Heart left ventricle (tissue), 16 donors: ENCODE measurements at regions of chr11 and their contacts with region 1.

Region 1: GRCh38 chr11:33362051-33362910 is 105.1 kb downstream of the HIPK3 start:
- DNase-seq: no peak
- ATAC-seq: peak in 3 of 4 donors; percentile 20 to 48 (median 33)
- H3K4me3 ChIP-seq: no peak overlapping the region
- H3K27ac ChIP-seq: no peak overlapping the region
- H3K4me1 ChIP-seq: peaks cover 0 to 15% (median 2%) of the 10 kb centered on the region in 12 donors
- H3K27me3 ChIP-seq: no peaks in the 10 kb centered on the region
- CTCF ChIP-seq: peak; percentile 62 to 86 (median 76)
- POLR2A ChIP-seq: no peak

Region 2: GRCh38 chr11:33542921-33543320 is 180.6 kb after region 1 on chr11:
- intact Hi-C with region 1: loop called in 1 of 10 experiments (anchors 10 kb)
- DNase-seq: peak in 3 of 5 donors; percentile 36 to 44 (median 40)
- ATAC-seq: peak in 2 of 4 donors; percentile 46
- H3K4me3 ChIP-seq: no peak overlapping the region
- H3K27ac ChIP-seq: no peak overlapping the region
- H3K4me1 ChIP-seq: peaks cover 0 to 16% (median 2%) of the 10 kb centered on the region in 12 donors
- H3K27me3 ChIP-seq: peaks cover 0 to 3% (median 0%) of the 10 kb centered on the region in 9 donors
- CTCF ChIP-seq: peak; percentile 38 to 63 (median 56)
- POLR2A ChIP-seq: no peak

Region 3: GRCh38 chr11:33564856-33565453 is 202.7 kb after region 1 on chr11:
- intact Hi-C with region 1: loop called in 1 of 10 experiments (anchors 10 kb)
- DNase-seq: no peak
- ATAC-seq: no peak
- H3K4me3 ChIP-seq: no peak overlapping the region
- H3K27ac ChIP-seq: no peak overlapping the region
- H3K4me1 ChIP-seq: no peaks in the 10 kb centered on the region
- H3K27me3 ChIP-seq: peaks cover 0 to 3% (median 0%) of the 10 kb centered on the region in 9 donors
- CTCF ChIP-seq: no peak
- POLR2A ChIP-seq: no peak

Region 4: DNA sequence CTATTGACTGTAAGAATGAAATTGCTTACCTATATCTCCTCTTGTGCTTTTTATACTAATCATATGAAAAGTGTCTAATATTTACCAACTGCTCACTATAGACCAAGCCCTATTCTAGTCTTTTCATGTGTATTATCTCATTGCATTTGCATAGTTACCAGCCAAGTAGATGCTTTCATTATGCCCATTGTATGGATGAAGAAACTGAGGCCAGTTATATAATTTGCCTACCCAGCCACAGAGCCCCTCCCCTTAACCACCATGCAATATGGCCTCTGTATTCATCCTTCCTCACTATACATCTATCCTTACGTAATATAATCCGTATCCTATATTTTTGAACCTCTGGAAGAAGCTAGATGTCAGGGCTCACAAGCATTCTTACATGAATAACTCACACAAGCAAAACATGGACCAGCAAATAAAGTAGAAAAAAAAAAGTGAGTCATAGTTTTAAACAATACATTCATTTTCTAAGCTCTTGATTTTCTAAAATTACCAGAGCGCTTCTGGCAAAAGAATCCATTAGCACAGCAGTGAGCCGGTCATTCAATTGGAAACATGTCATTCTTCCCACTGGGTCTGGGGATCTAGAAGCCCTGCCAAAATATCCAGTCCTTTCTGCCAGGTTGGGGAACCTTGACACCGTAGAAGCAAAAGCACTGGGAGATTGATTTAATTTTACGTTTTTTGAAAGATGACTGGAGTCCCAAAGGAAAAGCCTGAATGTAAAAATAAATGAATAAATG is 258.3 kb after region 1 on chr11:
- intact Hi-C with region 1: no loop called
- DNase-seq: no peak
- ATAC-seq: peak in 1 of 4 donors; percentile 28
- H3K4me3 ChIP-seq: no peak overlapping the region
- H3K27ac ChIP-seq: no peak overlapping the region
- H3K4me1 ChIP-seq: peaks cover 0 to 5% (median 0%) of the 10 kb centered on the region in 12 donors
- H3K27me3 ChIP-seq: no peaks in the 10 kb centered on the region
- CTCF ChIP-seq: no peak
- POLR2A ChIP-seq: no peak

Region 5: DNA sequence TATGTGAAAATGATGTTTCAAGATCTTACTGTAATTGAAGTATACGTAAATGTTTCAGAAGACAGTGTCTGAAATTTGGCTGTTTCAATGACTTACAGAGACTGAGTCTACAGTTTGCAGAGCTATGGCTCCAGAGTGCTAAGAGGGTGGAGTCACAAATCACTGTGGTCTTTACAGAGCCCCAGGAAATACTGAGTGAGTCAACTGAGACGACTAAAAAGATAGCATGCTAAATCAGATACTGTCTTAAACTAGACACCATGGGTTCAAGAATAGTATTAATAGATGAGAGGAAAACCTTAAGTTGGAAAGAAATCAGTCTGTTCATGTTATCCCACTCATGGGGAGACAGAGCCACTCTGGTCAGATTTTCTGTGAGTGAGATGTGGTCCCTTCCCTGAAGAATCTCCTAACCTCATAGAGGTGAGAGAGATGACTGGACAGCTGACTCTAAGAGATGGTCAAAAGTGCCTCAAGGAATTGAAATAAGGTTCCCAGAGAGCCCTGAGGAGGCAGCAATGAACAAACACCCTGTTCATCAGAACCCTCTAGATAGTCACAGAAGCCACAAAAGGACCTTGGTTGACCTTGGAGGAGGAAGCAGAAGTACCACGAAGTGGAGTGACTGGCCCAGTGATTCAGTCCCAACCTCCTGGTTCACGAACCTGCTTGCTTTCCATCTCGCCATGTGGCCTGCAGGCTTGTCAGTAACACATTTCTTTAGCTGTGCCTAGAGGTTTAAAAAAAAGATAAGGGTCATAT is 308.1 kb after region 1 on chr11:
- intact Hi-C with region 1: loop called in 1 of 10 experiments (anchors 5 kb)
- DNase-seq: no peak
- ATAC-seq: no peak
- H3K4me3 ChIP-seq: no peak overlapping the region
- H3K27ac ChIP-seq: no peak overlapping the region
- H3K4me1 ChIP-seq: no peaks in the 10 kb centered on the region
- H3K27me3 ChIP-seq: no peaks in the 10 kb centered on the region
- CTCF ChIP-seq: no peak
- POLR2A ChIP-seq: no peak

Region 6: GRCh38 chr11:33736148-33736809 is 374.0 kb after region 1 on chr11 and contains the start of gene CD59:
- intact Hi-C with region 1: loop called in 9 of 10 experiments (anchors 5 kb)
- DNase-seq: peak; percentile 98
- ATAC-seq: peak; percentile 94 to 96 (median 96)
- H3K4me3 ChIP-seq: peak within 1 kb of the TSS; percentile 75 to 98 (median 92)
- H3K27ac ChIP-seq: peak within 1 kb of the TSS; percentile 93 to 100 (median 98)
- H3K4me1 ChIP-seq: peaks cover 4 to 51% (median 41%) of the 10 kb centered on the region in 12 donors
- H3K27me3 ChIP-seq: no peaks in the 10 kb centered on the region
- CTCF ChIP-seq: peak in 1 of 12 donors; percentile 19
- POLR2A ChIP-seq: peak; percentile 80 to 98
- total RNA-seq, gene CD59: 588 to 1,434 (median 930) TPM

Region 7: DNA sequence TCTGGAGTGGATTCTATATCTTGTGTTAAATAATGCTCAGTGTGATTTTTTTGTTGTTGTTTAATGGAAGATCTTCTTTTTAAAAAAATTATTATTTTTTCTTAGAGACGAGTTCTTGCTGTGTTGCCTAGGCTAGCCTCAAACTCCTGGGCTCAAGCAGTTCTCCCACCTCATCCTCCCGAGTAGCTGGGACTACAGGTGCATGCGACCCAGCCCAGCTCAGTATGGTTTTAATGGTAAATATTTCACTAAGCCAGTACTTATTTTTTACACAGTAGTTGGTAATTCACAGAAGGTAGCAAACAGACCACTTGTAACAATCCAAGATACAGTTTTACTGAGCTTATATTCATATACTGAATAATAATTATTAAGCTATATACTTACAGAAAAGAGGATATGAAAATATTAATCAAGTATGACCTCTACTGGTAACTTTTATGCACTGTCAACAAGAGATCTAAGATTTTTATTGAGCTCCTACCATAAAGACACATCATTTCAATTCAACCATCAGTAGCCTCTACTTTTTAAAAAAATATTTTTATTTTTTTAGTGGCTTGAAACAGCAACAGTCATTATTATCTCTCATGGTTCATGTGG is 380.1 kb after region 1 on chr11:
- intact Hi-C with region 1: loop called (anchors 1 to 5 kb)
- DNase-seq: no peak
- ATAC-seq: peak in 3 of 4 donors; percentile 14 to 49 (median 39)
- H3K4me3 ChIP-seq: no peak overlapping the region
- H3K27ac ChIP-seq: peak overlapping the region in 2 of 12 donors; percentile 1 to 58
- H3K4me1 ChIP-seq: peaks cover 0 to 30% (median 10%) of the 10 kb centered on the region in 12 donors
- H3K27me3 ChIP-seq: no peaks in the 10 kb centered on the region
- CTCF ChIP-seq: peak; percentile 32 to 76 (median 60)
- POLR2A ChIP-seq: no peak

Region 8: DNA sequence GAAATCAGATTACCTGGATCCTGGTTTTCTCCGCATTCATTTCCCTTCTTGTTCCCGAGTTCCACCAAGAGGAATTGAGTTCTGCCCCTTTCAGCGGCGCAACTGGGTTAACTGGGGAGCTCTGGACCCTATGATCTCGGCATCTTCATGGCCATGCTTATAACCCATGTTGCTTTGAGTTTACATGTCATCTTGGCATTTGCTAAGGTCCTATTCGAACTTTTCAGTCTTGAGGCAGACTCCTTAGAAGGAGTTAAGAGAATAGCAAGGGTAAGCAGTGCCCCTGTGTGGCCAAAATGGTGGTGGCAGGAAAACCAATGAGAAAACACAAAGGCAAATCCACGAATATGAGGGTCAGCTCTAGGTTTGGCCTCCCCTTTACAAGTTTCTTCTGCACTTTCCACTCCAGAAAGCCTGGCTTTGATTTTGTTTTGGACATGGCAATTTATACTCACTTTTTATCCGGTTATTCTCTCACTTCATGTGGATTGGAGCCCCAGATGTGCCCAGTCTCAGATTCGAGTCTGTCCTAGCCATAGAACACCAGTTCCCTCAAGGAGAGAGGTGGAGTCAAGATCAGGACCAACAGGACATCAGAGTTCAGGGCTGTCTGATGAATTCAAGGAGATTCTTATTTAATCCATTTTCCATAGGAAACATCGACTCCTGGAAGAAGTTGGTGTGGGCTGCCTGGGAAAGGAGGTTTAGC is 467.3 kb after region 1 on chr11:
- intact Hi-C with region 1: loop called in 8 of 10 experiments (anchors 5 kb)
- DNase-seq: peak in 4 of 5 donors; percentile 35 to 52 (median 46)
- ATAC-seq: peak in 3 of 4 donors; percentile 82 to 91 (median 86)
- H3K4me3 ChIP-seq: peak overlapping the region; percentile 21 to 58 (median 49)
- H3K27ac ChIP-seq: no peak overlapping the region
- H3K4me1 ChIP-seq: peaks cover 3 to 10% (median 7%) of the 10 kb centered on the region in 12 donors
- H3K27me3 ChIP-seq: peaks cover 0 to 49% (median 11%) of the 10 kb centered on the region in 9 donors
- CTCF ChIP-seq: peak; percentile 56 to 85 (median 76)
- POLR2A ChIP-seq: no peak